Stomach (tissue), 19 donors: ENCODE measurements at regions of chr3 and their contacts with region 1.

Region 1: DNA sequence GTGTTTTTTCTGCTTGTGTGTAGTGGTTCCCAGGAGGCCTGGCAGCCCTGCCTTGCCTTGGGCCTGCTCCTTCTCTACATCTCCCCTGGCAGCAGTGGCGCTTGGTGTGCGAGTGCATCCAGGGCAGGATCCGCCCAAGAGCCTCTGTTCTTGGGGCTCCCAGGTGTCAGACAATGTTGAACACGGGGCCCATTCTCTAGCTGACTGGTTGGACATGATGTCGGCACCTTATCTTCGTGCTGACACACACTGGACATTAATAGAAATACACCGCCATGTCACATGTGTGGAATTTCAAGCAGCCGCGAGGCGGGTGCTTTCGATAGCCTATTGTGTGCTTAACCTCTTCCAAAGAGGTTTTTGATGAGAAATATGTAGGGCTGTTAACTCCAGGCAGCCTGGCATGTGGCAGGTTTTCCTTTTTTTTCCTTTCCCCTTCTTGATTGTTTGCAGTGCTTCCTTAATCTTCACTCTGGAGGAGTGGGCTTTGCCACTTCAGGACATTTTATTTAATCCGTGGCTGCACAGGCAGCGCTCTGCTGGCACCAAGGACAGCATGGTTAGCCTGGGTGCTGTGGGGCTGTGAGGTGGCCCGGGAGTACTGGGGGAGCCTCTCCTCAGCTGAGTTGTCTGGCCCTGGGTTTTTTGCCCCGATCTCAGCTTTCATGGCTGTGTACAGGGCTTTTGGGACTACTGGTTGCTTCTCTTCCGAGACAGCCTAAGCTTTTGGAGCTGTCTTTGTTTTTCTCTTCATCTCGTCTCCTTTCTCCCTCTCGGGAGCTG is 42.5 kb downstream of the CHCHD6 start:
- DNase-seq: peak; percentile 52 to 81
- H3K4me3 ChIP-seq: no peak overlapping the region
- H3K27ac ChIP-seq: no peak overlapping the region
- H3K4me1 ChIP-seq: peaks cover 0 to 19% (median 12%) of the 10 kb centered on the region in 4 donors
- H3K27me3 ChIP-seq: no peaks in the 10 kb centered on the region
- CTCF ChIP-seq: peak in 1 of 7 experiments; percentile 19
- EP300 ChIP-seq: no peak
- POLR2A ChIP-seq: no peak

Region 2: DNA sequence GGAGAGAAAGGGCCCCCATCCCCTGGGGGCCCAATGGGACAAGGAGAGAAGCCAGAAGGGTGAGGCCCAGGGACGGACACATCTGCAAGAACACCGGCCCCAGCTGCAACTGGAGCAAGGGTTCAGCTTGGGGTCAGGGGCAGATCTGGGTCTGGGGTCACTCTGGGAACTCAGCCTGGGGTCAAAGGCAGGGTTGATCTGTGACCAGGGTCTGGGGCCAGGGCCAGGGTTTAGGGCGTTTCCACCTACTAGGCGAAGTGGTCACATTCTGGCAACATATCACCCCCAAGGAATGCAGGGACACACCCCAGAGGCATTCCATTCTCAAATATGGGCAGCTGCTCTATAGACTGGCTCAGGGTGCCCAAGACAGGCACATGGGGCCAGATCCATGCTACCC is 238.0 kb before region 1 on chr3:
- intact Hi-C with region 1: no loop called
- DNase-seq: no peak
- H3K4me3 ChIP-seq: no peak overlapping the region
- H3K27ac ChIP-seq: no peak overlapping the region
- H3K4me1 ChIP-seq: no peaks in the 10 kb centered on the region
- H3K27me3 ChIP-seq: peaks cover 0 to 7% (median 0%) of the 10 kb centered on the region in 3 donors
- CTCF ChIP-seq: no peak
- EP300 ChIP-seq: no peak
- POLR2A ChIP-seq: no peak

Region 3: GRCh38 chr3:126607214-126607908 is 139.2 kb before region 1 on chr3:
- intact Hi-C with region 1: no loop called
- DNase-seq: peak in 1 of 2 donors; percentile 21
- H3K4me3 ChIP-seq: no peak overlapping the region
- H3K27ac ChIP-seq: no peak overlapping the region
- H3K4me1 ChIP-seq: no peaks in the 10 kb centered on the region
- H3K27me3 ChIP-seq: no peaks in the 10 kb centered on the region
- CTCF ChIP-seq: no peak
- EP300 ChIP-seq: no peak
- POLR2A ChIP-seq: no peak

Region 4: DNA sequence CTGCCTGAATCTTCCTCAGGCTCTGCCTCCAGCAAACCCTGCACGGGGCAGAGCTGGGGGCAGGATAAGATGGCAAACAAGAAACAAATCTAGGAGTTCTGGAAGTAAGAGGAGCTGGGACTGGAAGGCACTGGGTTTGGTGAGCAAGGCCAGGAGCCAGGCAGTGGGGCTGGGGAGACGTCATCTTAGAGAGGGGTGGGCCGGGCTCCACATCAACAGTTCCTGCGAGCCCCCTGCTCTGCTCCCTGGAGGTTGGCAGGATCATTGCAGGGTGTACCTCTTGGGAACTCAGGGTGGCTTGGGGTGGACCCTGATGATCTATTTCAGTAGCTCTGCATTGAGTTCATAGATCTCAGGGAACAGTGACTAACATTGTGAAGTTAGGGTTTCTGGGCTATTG is 359.0 kb after region 1 on chr3:
- intact Hi-C with region 1: no loop called
- DNase-seq: no peak
- H3K4me3 ChIP-seq: no peak overlapping the region
- H3K27ac ChIP-seq: no peak overlapping the region
- H3K4me1 ChIP-seq: no peaks in the 10 kb centered on the region
- H3K27me3 ChIP-seq: peaks cover 0 to 14% (median 0%) of the 10 kb centered on the region in 3 donors
- CTCF ChIP-seq: no peak
- EP300 ChIP-seq: no peak
- POLR2A ChIP-seq: no peak

Region 5: GRCh38 chr3:127325629-127325961 is 579.0 kb after region 1 on chr3:
- intact Hi-C with region 1: no loop called
- DNase-seq: no peak
- H3K4me3 ChIP-seq: no peak overlapping the region
- H3K27ac ChIP-seq: no peak overlapping the region
- H3K4me1 ChIP-seq: no peaks in the 10 kb centered on the region
- H3K27me3 ChIP-seq: peaks cover 0 to 15% (median 0%) of the 10 kb centered on the region in 3 donors
- CTCF ChIP-seq: no peak
- EP300 ChIP-seq: no peak
- POLR2A ChIP-seq: no peak

Region 6: GRCh38 chr3:127455541-127456450 is 709.2 kb after region 1 on chr3:
- intact Hi-C with region 1: loop called (anchors 5 kb)
- DNase-seq: peak; percentile 83 to 91
- H3K4me3 ChIP-seq: peak overlapping the region; percentile 29 to 43 (median 31)
- H3K27ac ChIP-seq: peak overlapping the region; percentile 30 to 78 (median 70)
- H3K4me1 ChIP-seq: peaks cover 19 to 33% (median 26%) of the 10 kb centered on the region in 4 donors
- H3K27me3 ChIP-seq: peaks cover 0 to 84% (median 39%) of the 10 kb centered on the region in 3 donors
- CTCF ChIP-seq: peak in 5 of 7 experiments; percentile 76 to 89 (median 88)
- EP300 ChIP-seq: no peak
- POLR2A ChIP-seq: no peak